ENCODE measurements at regions of chr17 and their contacts with region 1.

Region 1: GRCh38 chr17:4948931-4949320 is 596 bp upstream of the PFN1 start:
- DNase-seq: peak; percentile 74
- ATAC-seq: peak; percentile 45
- H3K4me3 Mint-ChIP-seq: peak overlapping the region; percentile 100
- H3K27ac Mint-ChIP-seq: peak overlapping the region; percentile 100
- H3K4me1 Mint-ChIP-seq: peaks cover 44% of the 10 kb centered on the region
- H3K27me3 Mint-ChIP-seq: peaks cover 2% of the 10 kb centered on the region
- CTCF ChIP-seq: no peak

Region 2: DNA sequence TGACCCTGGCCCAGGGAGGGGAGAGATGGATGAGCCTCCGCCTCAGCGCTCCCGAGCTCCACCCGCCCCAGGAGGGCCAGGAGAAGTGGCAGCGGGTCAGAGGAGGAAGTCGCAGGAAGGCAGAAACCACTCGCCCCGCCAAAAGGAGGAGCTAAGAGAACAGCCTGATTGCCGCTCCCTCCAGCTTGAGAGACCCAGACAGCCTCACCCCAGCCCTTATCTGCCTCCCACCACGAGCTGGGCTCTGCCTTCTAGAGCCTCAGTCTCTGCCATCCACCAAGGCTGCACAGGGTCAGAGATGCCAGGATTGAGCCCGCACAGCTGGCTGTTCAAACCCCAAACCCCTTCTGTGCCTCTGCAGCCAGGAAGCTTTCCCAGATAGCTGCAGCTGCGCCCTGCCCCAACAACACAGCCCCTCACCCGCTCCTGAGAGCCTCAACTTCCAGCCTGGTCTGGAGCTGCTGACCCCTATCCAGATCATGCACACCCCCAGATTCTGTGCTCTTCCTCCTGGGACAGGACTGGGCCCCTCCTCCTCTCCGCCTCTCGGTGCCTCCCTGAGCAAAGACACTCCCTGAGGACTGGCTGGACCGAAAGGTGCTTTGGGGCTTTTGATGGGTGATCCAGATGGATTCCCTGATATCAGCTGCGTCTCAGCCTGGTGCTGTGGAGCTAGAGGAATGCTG is 983.7 kb before region 1 on chr17:
- CTCF ChIA-PET with region 1: no interaction called
- POLR2A ChIA-PET with region 1: no interaction called
- intact Hi-C with region 1: loop called (anchors 5 kb)
- DNase-seq: peak; percentile 64
- ATAC-seq: peak; percentile 49
- H3K4me3 Mint-ChIP-seq: peak overlapping the region; percentile 87
- H3K27ac Mint-ChIP-seq: peak overlapping the region; percentile 94
- H3K4me1 Mint-ChIP-seq: peaks cover 77% of the 10 kb centered on the region
- H3K27me3 Mint-ChIP-seq: no peaks in the 10 kb centered on the region
- CTCF ChIP-seq: no peak

Region 3: DNA sequence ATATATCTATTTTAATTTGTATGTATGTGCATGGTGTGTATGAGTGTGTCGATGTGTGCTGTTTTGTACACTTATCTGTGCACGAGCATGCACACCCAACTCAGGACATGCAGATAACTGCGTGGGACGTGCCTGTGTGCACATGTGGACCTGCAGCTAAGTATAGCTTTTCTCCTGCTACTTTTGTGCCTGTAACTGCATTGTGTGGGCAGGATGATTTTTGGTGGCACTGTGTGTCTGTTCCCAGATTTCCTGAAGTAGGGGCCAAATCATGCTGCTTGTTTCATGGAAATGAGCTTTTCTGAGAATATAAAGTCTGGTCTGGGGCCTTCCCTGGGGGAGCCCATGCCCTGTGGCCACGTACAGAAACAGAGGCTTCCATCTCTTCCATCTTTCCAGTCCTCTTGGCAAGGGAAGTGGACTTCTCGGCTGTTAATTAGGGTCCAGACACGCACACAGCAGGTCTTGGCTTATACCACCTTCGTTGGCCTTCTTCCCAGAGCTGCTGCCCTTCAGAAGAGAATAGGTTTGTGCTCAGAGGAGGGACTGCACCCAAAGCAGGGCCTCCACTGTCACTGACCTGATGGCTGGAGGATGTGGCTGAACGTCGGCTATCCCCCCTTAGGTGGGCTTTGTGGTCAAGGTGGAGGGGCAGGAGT is 485.0 kb before region 1 on chr17:
- CTCF ChIA-PET with region 1: no interaction called
- POLR2A ChIA-PET with region 1: no interaction called
- intact Hi-C with region 1: no loop called
- DNase-seq: no peak
- ATAC-seq: no peak
- H3K4me3 Mint-ChIP-seq: no peak overlapping the region
- H3K27ac Mint-ChIP-seq: no peak overlapping the region
- H3K4me1 Mint-ChIP-seq: no peaks in the 10 kb centered on the region
- H3K27me3 Mint-ChIP-seq: no peaks in the 10 kb centered on the region
- CTCF ChIP-seq: no peak

Region 4: GRCh38 chr17:4806777-4807604 is 141.9 kb before region 1 on chr17 and contains the start of gene PLD2:
- CTCF ChIA-PET with region 1: no interaction called
- POLR2A ChIA-PET with region 1: interaction called, 5 read pairs
- intact Hi-C with region 1: loop called (anchors 5 kb)
- DNase-seq: peak; percentile 90
- ATAC-seq: peak; percentile 99
- H3K4me3 Mint-ChIP-seq: peak within 1 kb of the TSS; percentile 83
- H3K27ac Mint-ChIP-seq: peak within 1 kb of the TSS; percentile 56
- H3K4me1 Mint-ChIP-seq: peaks cover 17% of the 10 kb centered on the region
- H3K27me3 Mint-ChIP-seq: no peaks in the 10 kb centered on the region
- CTCF ChIP-seq: no peak
- total RNA-seq, gene PLD2: 49.9 and 54.3 TPM in 2 replicates

Region 5: GRCh38 chr17:4966844-4967538 is 18.1 kb after region 1 on chr17:
- CTCF ChIA-PET with region 1: interaction called, 7 read pairs
- POLR2A ChIA-PET with region 1: interaction called, 391 read pairs
- intact Hi-C with region 1: loop called (anchors 1 kb)
- DNase-seq: no peak
- ATAC-seq: peak; percentile 87
- H3K4me3 Mint-ChIP-seq: no peak overlapping the region
- H3K27ac Mint-ChIP-seq: no peak overlapping the region
- H3K4me1 Mint-ChIP-seq: peaks cover 18% of the 10 kb centered on the region
- H3K27me3 Mint-ChIP-seq: no peaks in the 10 kb centered on the region
- CTCF ChIP-seq: no peak

Region 6: GRCh38 chr17:4986951-4987766 is 38.2 kb after region 1 on chr17 and contains the start of gene CAMTA2:
- CTCF ChIA-PET with region 1: interaction called, 6 read pairs
- POLR2A ChIA-PET with region 1: interaction called, 61 read pairs
- intact Hi-C with region 1: loop called (anchors 1 kb)
- DNase-seq: peak; percentile 88
- ATAC-seq: peak; percentile 80
- H3K4me3 Mint-ChIP-seq: peak within 1 kb of the TSS; percentile 92
- H3K27ac Mint-ChIP-seq: peak within 1 kb of the TSS; percentile 93
- H3K4me1 Mint-ChIP-seq: peaks cover 32% of the 10 kb centered on the region
- H3K27me3 Mint-ChIP-seq: no peaks in the 10 kb centered on the region
- CTCF ChIP-seq: no peak
- total RNA-seq, gene CAMTA2: 45.9 and 57.9 TPM in 2 replicates

Region 7: DNA sequence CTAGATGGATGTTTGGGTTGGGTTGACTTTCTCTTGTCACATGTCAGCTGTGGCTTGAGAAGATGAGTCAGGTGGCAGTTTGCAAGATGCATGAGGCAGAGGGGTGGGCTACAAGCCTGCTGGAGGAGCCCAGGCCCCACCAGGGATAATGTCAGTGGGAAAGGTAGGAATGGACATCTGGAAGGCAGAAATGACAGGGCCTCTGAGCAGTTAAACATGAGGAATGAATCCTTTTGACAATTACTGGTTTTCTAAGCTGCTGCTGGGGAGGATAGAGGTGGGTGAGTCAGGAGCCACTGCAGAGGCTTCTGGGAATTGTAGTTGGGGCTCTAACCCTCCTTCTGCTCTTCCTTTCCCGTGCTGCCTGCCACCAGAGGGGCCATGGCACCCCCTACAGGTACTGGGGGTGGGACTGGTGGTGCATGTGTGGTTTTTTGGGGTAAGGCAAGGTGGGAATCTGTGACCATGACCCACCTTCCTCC is 70.6 kb after region 1 on chr17:
- CTCF ChIA-PET with region 1: no interaction called
- POLR2A ChIA-PET with region 1: interaction called, 30 read pairs
- intact Hi-C with region 1: loop called (anchors 2 kb)
- DNase-seq: peak; percentile 31
- ATAC-seq: peak; percentile 49
- H3K4me3 Mint-ChIP-seq: no peak overlapping the region
- H3K27ac Mint-ChIP-seq: peak overlapping the region; percentile 32
- H3K4me1 Mint-ChIP-seq: peaks cover 28% of the 10 kb centered on the region
- H3K27me3 Mint-ChIP-seq: no peaks in the 10 kb centered on the region
- CTCF ChIP-seq: no peak

Region 8: GRCh38 chr17:5419356-5419958 is 470.5 kb after region 1 on chr17 and contains the start of gene NUP88:
- CTCF ChIA-PET with region 1: no interaction called
- POLR2A ChIA-PET with region 1: interaction called, 6 read pairs
- intact Hi-C with region 1: loop called (anchors 5 kb)
- DNase-seq: peak; percentile 87
- ATAC-seq: peak; percentile 86
- H3K4me3 Mint-ChIP-seq: peak within 1 kb of the TSS; percentile 100
- H3K27ac Mint-ChIP-seq: peak within 1 kb of the TSS; percentile 100
- H3K4me1 Mint-ChIP-seq: peaks cover 49% of the 10 kb centered on the region
- H3K27me3 Mint-ChIP-seq: no peaks in the 10 kb centered on the region
- CTCF ChIP-seq: no peak
- total RNA-seq, gene NUP88: 158 and 187 TPM in 2 replicates

Measured in activated B cell treated with CpG ODN at 0.5 μM for 24 hours (primary cell).